IMR-90 (cell line): ENCODE measurements at regions of chr4 and their contacts with region 1.

Region 1: GRCh38 chr4:38179690-38180377 is 219.6 kb downstream of the PTTG2 start:
- DNase-seq: peak; percentile 77
- ATAC-seq: peak; percentile 90
- H3K4me3 ChIP-seq: no peak overlapping the region
- H3K27ac ChIP-seq: no peak overlapping the region
- H3K4me1 ChIP-seq: peaks cover 12% of the 10 kb centered on the region
- H3K27me3 ChIP-seq: no peaks in the 10 kb centered on the region
- CTCF ChIP-seq: peak; percentile 85
- POLR2A ChIP-seq: no peak
- RAD21 ChIP-seq: peak; percentile 92

Region 2: DNA sequence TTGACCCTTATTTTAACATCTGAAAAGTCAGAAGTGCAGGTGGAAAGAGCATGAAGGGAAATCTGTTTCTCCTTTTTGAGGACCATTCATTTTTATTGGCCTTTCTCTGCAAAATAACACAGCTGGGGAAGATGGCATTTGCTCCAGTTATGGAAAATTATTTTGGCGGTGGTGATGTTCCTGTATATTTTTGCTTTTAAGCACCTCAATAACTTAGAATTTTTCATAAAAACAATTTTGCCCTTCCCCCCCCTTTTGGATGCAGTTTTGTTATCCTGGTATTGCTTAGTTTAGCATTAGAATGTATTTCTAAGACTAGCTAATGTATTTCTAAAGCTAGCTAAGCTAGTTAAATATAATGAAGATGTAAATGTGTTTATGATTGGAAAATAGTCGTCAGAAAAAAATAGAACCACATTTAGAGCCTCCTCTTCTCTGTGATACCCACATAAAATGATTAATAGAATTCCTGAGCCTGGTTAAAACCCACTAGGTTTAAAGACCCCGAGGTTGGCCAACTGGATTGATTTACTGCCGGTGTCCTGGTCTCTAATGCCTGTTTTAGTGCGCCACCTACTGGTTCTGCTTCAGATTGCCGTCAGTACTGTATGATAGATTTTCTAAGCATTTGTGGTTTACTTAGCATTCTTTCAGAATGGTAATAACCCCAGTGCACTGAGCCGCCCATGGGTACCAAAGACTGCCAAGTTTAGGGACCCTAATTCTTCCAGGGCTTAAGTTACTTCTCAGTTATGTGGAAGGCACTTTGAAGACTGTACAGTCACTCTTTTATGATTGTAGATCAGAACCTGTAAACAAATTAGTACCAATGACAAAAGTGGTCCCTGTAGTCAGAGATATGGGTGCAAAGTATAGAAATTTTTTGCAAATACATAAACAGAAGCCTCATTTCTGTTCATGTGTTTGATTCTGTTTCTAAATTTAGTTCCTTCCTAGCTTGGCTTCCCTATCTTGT is 495.6 kb after region 1 on chr4:
- CTCF ChIA-PET with region 1: interaction called, 7 read pairs
- POLR2A ChIA-PET with region 1: no interaction called
- dilution Hi-C with region 1: no loop called
- in situ Hi-C with region 1: loop called (anchors 5 kb)
- intact Hi-C with region 1: loop called (anchors 1 kb)
- DNase-seq: peak; percentile 88
- ATAC-seq: peak; percentile 70
- H3K4me3 ChIP-seq: no peak overlapping the region
- H3K27ac ChIP-seq: no peak overlapping the region
- H3K4me1 ChIP-seq: peaks cover 40% of the 10 kb centered on the region
- H3K27me3 ChIP-seq: no peaks in the 10 kb centered on the region
- CTCF ChIP-seq: peak; percentile 94
- POLR2A ChIP-seq: no peak
- RAD21 ChIP-seq: peak; percentile 98